Mammary epithelial cell (primary cell): ENCODE measurements at regions of chr2 and their contacts with region 1.

Region 1: GRCh38 chr2:192487636-192488035 is 292.9 kb upstream of the TMEFF2 start:
- DNase-seq: no peak
- H3K4me3 ChIP-seq: no peak overlapping the region
- H3K27ac ChIP-seq: no peak overlapping the region
- H3K4me1 ChIP-seq: no peaks in the 10 kb centered on the region
- H3K27me3 ChIP-seq: no peaks in the 10 kb centered on the region
- CTCF ChIP-seq: no peak

Region 2: GRCh38 chr2:192438063-192438638 is 49.5 kb before region 1 on chr2:
- CTCF ChIA-PET with region 1: interaction called, 24 read pairs
- dilution Hi-C with region 1: no loop called
- in situ Hi-C with region 1: no loop called
- intact Hi-C with region 1: no loop called
- DNase-seq: no peak
- H3K4me3 ChIP-seq: no peak overlapping the region
- H3K27ac ChIP-seq: no peak overlapping the region
- H3K4me1 ChIP-seq: no peaks in the 10 kb centered on the region
- H3K27me3 ChIP-seq: no peaks in the 10 kb centered on the region
- CTCF ChIP-seq: no peak